Right ventricle myocardium inferior (tissue), 1 donor: ENCODE measurements at regions of chr19 and their contacts with region 1.

Region 1: DNA sequence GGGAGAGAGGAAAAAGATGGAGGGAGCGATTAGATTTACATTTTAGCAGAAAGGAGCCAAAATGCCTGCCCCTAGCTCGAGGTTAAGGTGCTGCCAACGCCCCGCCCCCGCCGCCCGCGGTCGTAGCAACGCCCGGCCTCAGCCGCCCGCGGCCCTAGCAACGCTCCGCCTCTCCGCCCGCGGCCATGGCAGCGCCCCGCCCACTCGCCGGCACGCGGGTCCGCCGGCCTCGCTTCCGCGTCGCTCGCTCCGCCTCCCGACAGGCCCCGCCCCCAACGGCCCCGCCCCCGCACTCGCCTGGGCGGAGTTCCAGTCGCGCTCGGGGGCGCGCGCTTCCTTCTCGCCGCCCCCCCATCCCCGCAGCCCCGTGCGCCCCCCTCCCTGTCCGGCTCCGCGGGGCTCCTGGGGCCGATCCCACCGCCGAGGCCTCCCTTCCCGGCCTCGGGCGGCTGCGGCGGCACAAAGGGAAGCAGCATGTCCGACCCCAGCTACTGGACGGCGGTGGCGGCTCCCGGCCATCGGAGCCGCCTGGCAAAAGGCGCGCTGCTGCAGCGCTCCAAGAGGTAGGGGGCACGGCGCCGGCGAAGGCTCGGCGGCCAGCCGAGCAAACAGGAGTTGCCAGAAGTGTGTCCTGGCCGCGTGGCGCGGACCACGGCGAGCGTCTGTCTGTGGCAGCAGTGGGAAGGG is 20.3 kb downstream of the MAST3 start:
- DNase-seq: peak; percentile 95
- ATAC-seq: peak; percentile 95

Region 2: GRCh38 chr19:18152444-18152816 is 34.6 kb after region 1 on chr19:
- intact Hi-C with region 1: loop called (anchors 2 kb)
- DNase-seq: peak; percentile 97
- ATAC-seq: peak; percentile 77

Region 3: DNA sequence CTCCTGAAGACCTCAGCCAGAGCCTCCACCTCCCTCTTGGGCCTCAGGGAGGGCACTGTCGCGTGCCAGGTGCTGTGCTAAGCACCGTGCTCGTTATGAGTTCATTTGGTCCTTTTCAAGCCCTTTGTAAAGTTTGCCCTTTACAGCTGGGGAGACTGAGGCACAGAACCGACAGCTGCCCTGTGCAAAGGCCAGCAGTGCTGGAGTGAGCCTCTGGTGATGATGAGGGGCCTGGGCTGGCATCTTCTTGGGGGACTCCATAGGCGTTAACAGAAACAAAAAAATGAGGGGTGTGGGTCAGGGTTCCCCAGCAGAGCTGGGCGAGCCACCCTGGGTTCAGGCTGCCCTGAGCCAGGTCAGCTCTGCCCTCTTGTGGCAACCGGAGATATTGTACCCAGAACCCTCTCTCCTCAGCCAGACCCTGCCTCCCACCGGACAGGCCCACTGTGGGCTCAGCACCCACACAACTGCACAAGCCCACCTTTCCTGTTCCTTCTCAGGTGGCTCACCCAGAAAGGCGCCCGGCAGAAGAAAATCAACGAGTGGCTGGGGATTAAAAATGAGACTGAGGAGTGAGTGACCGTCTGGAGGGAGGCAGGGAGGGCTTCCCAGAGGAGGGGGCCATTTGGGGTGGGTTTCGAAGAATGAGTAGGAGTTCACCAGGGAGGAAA is 50.3 kb after region 1 on chr19:
- intact Hi-C with region 1: loop called (anchors 2 kb)
- DNase-seq: no peak
- ATAC-seq: peak; percentile 32

Region 4: GRCh38 chr19:18251587-18252369 is 133.9 kb after region 1 on chr19:
- intact Hi-C with region 1: loop called (anchors 1 kb)
- DNase-seq: peak; percentile 75
- ATAC-seq: peak; percentile 67